Activated CD4-positive, alpha-beta memory T cell treated with anti-CD3 and anti-CD28 coated beads, Interleukin-2, amount 10 ng/mL, durations not matched to agents 7 days and 5 days (primary cell): ENCODE measurements at regions of chr10 and their contacts with region 1.

Region 1: GRCh38 chr10:6667679-6668270 is 87.7 kb upstream of the PRKCQ start:
- DNase-seq: peak; percentile 57
- H3K4me3 Mint-ChIP-seq: no peak overlapping the region
- H3K27ac Mint-ChIP-seq: no peak overlapping the region
- H3K4me1 Mint-ChIP-seq: peaks cover 31% of the 10 kb centered on the region
- H3K27me3 Mint-ChIP-seq: peaks cover 18% of the 10 kb centered on the region

Region 2: GRCh38 chr10:6409971-6410651 is 257.7 kb before region 1 on chr10:
- CTCF ChIA-PET with region 1: interaction called, 15 read pairs
- POLR2A ChIA-PET with region 1: interaction called, 4 read pairs
- DNase-seq: peak; percentile 67
- H3K4me3 Mint-ChIP-seq: peak overlapping the region; percentile 68
- H3K27ac Mint-ChIP-seq: peak overlapping the region; percentile 88
- H3K4me1 Mint-ChIP-seq: peaks cover 54% of the 10 kb centered on the region
- H3K27me3 Mint-ChIP-seq: peaks cover 2% of the 10 kb centered on the region

Region 3: DNA sequence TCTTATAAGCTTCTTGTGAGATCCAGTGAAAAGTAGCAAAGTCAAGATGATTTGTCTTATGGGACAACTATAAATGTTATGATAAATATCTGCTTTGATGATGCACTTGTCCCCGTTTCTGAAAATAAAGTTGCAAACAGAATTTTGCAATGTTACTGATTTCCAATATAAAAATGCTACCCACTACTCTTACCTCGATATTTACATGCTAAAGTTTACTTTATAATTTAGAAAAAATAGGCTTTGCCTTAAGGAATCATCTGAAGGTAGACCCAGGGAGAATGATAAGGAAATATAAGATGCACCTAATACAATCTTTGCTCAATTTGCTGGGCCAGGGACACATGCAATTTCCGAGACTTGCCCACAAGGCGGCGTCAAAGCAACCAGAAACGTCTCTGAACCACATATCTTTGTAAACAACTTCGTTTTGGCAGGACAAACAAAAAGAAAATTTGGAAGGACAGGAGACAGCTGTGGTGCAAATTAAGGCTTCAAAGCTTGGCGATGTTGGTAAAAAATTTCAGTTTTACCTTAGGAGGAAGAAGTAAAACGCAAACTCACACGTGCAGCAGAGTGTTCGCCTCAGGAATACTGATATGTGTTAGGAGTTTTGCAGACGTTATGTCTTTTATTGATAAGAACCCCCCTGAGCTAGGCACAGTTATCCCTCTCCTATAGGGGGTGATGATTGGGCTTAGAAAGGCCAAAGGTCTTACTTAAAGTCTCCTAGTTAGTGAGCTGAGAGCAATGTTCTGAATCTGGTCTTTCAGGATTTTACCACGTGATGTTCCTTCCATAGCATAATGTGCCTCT is 222.1 kb before region 1 on chr10:
- CTCF ChIA-PET with region 1: interaction called, 17 read pairs
- POLR2A ChIA-PET with region 1: interaction called, 3 read pairs
- DNase-seq: peak; percentile 78
- H3K4me3 Mint-ChIP-seq: no peak overlapping the region
- H3K27ac Mint-ChIP-seq: peak overlapping the region; percentile 3
- H3K4me1 Mint-ChIP-seq: peaks cover 47% of the 10 kb centered on the region
- H3K27me3 Mint-ChIP-seq: no peaks in the 10 kb centered on the region

Region 4: GRCh38 chr10:6563075-6563474 is 104.7 kb before region 1 on chr10:
- CTCF ChIA-PET with region 1: interaction called, 10 read pairs
- POLR2A ChIA-PET with region 1: interaction called, 5 read pairs
- DNase-seq: peak; percentile 70
- H3K4me3 Mint-ChIP-seq: peak overlapping the region; percentile 71
- H3K27ac Mint-ChIP-seq: peak overlapping the region; percentile 92
- H3K4me1 Mint-ChIP-seq: peaks cover 90% of the 10 kb centered on the region
- H3K27me3 Mint-ChIP-seq: no peaks in the 10 kb centered on the region

Region 5: DNA sequence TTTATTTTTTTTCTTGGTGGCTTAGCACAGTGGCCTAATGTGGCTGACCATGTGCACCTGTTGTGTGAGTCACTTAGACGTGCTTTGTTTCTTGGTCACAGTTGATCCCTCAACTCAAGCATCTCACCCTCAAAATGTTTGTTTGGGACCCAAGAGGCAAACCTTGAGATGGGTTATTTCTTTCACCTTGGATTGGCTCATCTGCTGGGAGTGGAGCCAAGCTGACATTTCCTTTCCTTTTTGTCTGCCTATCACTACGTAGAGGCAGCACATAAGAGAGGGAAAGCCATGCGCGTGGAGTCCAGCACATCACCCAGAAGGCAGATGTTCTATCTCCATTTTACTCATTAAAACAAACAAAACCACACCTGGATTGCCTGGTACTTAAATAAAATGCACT is 81.3 kb before region 1 on chr10:
- CTCF ChIA-PET with region 1: interaction called, 110 read pairs
- POLR2A ChIA-PET with region 1: interaction called, 64 read pairs
- DNase-seq: no peak
- H3K4me3 Mint-ChIP-seq: peak overlapping the region; percentile 87
- H3K27ac Mint-ChIP-seq: peak overlapping the region; percentile 98
- H3K4me1 Mint-ChIP-seq: peaks cover 89% of the 10 kb centered on the region
- H3K27me3 Mint-ChIP-seq: no peaks in the 10 kb centered on the region

Region 6: GRCh38 chr10:6619660-6620059 is 48.1 kb before region 1 on chr10:
- CTCF ChIA-PET with region 1: no interaction called
- POLR2A ChIA-PET with region 1: no interaction called
- DNase-seq: no peak
- H3K4me3 Mint-ChIP-seq: no peak overlapping the region
- H3K27ac Mint-ChIP-seq: no peak overlapping the region
- H3K4me1 Mint-ChIP-seq: peaks cover 44% of the 10 kb centered on the region
- H3K27me3 Mint-ChIP-seq: peaks cover 4% of the 10 kb centered on the region

Region 7: GRCh38 chr10:6647811-6648526 is 19.8 kb before region 1 on chr10:
- CTCF ChIA-PET with region 1: interaction called, 14 read pairs
- POLR2A ChIA-PET with region 1: interaction called, 7 read pairs
- DNase-seq: peak; percentile 74
- H3K4me3 Mint-ChIP-seq: no peak overlapping the region
- H3K27ac Mint-ChIP-seq: no peak overlapping the region
- H3K4me1 Mint-ChIP-seq: peaks cover 44% of the 10 kb centered on the region
- H3K27me3 Mint-ChIP-seq: no peaks in the 10 kb centered on the region

Region 8: GRCh38 chr10:7491949-7492659 is 824.3 kb after region 1 on chr10:
- CTCF ChIA-PET with region 1: no interaction called
- POLR2A ChIA-PET with region 1: no interaction called
- DNase-seq: no peak
- H3K4me3 Mint-ChIP-seq: no peak overlapping the region
- H3K27ac Mint-ChIP-seq: peak overlapping the region; percentile 72
- H3K4me1 Mint-ChIP-seq: peaks cover 46% of the 10 kb centered on the region
- H3K27me3 Mint-ChIP-seq: peaks cover 2% of the 10 kb centered on the region